CD14-positive monocyte (primary cell): ENCODE measurements at regions of chr11 and their contacts with region 1.

Region 1: DNA sequence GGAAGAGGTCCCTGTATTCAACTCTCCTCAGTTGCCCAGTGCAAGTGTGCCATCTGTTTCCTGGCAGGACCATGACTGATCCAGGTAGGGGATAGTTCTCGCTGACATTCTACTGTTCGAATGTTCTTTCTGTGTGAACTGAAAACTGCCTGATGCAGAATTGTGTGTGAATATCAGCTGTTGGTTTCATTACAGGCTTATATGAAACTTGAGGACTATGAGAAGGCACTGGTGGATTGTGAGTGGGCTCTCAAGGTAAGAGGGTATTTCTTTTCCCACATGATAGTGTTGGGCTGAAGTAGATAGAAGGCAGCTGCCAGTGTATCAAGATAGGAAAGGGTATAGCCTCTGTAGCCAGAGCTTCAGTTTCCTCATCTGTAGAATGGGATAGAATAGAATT is 15.3 kb downstream of the TTC12 start:
- DNase-seq: no peak
- H3K4me3 ChIP-seq: no peak overlapping the region
- H3K4me3 Mint-ChIP-seq: no peak overlapping the region
- H3K27ac ChIP-seq: no peak overlapping the region
- H3K27ac Mint-ChIP-seq: peak overlapping the region in 1 of 7 donors; percentile 25
- H3K4me1 ChIP-seq: no peaks in the 10 kb centered on the region
- H3K4me1 Mint-ChIP-seq: no peaks in the 10 kb centered on the region
- H3K27me3 ChIP-seq: no peaks in the 10 kb centered on the region
- H3K27me3 Mint-ChIP-seq: peaks cover 0 to 3% (median 0%) of the 10 kb centered on the region in 3 donors
- CTCF ChIP-seq: no peak

Region 2: GRCh38 chr11:113345978-113346377 is 16.3 kb after region 1 on chr11:
- intact Hi-C with region 1: no loop called
- DNase-seq: no peak
- H3K4me3 ChIP-seq: no peak overlapping the region
- H3K4me3 Mint-ChIP-seq: no peak overlapping the region
- H3K27ac ChIP-seq: no peak overlapping the region
- H3K27ac Mint-ChIP-seq: no peak overlapping the region
- H3K4me1 ChIP-seq: no peaks in the 10 kb centered on the region
- H3K4me1 Mint-ChIP-seq: no peaks in the 10 kb centered on the region
- H3K27me3 ChIP-seq: no peaks in the 10 kb centered on the region
- H3K27me3 Mint-ChIP-seq: peaks cover 0 to 3% (median 0%) of the 10 kb centered on the region in 3 donors
- CTCF ChIP-seq: no peak

Region 3: DNA sequence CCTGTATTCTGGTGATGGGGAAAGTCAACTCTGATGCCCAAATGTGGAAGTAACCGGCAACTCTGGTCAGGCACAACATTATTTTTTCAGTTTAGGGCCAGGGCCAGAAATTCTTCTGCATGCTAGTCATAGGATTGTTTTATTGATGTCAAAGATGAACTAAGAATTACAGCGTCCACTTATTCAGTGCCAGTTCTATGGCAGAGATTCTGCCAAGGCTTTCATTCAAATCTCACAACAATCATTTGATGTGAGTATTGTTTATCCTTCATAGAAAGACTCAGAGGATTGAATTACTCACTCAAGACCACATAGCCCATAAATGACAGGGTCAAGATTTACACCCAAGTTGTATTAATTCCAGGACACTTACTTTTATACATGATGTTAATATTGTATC is 288.6 kb after region 1 on chr11:
- intact Hi-C with region 1: no loop called
- DNase-seq: no peak
- H3K4me3 ChIP-seq: no peak overlapping the region
- H3K4me3 Mint-ChIP-seq: no peak overlapping the region
- H3K27ac ChIP-seq: no peak overlapping the region
- H3K27ac Mint-ChIP-seq: no peak overlapping the region
- H3K4me1 ChIP-seq: no peaks in the 10 kb centered on the region
- H3K4me1 Mint-ChIP-seq: peaks cover 7% of the 10 kb centered on the region
- H3K27me3 ChIP-seq: no peaks in the 10 kb centered on the region
- H3K27me3 Mint-ChIP-seq: peaks cover 0 to under 1% (median 0%) of the 10 kb centered on the region in 3 donors
- CTCF ChIP-seq: no peak

Region 4: GRCh38 chr11:113884361-113884836 is 554.7 kb after region 1 on chr11:
- intact Hi-C with region 1: loop called in 1 of 2 experiments (anchors 10 kb)
- DNase-seq: no peak
- H3K4me3 ChIP-seq: no peak overlapping the region
- H3K4me3 Mint-ChIP-seq: no peak overlapping the region
- H3K27ac ChIP-seq: no peak overlapping the region
- H3K27ac Mint-ChIP-seq: no peak overlapping the region
- H3K4me1 ChIP-seq: no peaks in the 10 kb centered on the region
- H3K4me1 Mint-ChIP-seq: no peaks in the 10 kb centered on the region
- H3K27me3 ChIP-seq: no peaks in the 10 kb centered on the region
- H3K27me3 Mint-ChIP-seq: no peaks in the 10 kb centered on the region
- CTCF ChIP-seq: no peak